ENCODE measurements at regions of chr11 and their contacts with region 1.

Region 1: DNA sequence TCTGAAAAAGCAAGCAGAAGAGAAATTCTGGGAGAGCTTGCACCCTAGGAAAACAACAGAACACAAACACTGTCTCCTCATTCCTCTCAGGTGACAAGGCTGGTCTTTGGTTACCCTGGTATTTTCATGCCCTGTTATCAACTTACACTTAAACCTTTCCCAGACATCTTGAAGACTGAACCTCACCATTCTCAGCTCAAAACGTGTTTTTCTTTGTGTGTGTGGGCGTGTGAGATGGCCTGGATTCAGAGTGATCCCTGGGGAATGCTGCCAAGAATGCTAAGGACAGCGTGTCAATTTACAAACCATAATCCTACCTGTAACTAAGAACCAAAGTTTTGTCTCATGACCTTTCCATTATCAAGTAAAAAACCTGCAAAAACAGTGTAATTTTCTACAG is 33.3 kb downstream of the ELF5 start:
- DNase-seq: no peak
- ATAC-seq: no peak
- H3K4me3 ChIP-seq: no peak overlapping the region
- H3K27ac ChIP-seq: no peak overlapping the region
- H3K4me1 ChIP-seq: no peaks in the 10 kb centered on the region
- H3K27me3 ChIP-seq: no peaks in the 10 kb centered on the region
- CTCF ChIP-seq: no peak

Region 2: GRCh38 chr11:34379079-34379478 is 101.2 kb before region 1 on chr11:
- intact Hi-C with region 1: loop called in 1 of 3 experiments (anchors 10 kb)
- DNase-seq: no peak
- ATAC-seq: no peak
- H3K4me3 ChIP-seq: no peak overlapping the region
- H3K27ac ChIP-seq: no peak overlapping the region
- H3K4me1 ChIP-seq: no peaks in the 10 kb centered on the region
- H3K27me3 ChIP-seq: no peaks in the 10 kb centered on the region
- CTCF ChIP-seq: no peak